CD8-positive, alpha-beta memory T cell (primary cell): ENCODE measurements at regions of chr16 and their contacts with region 1.

Region 1: GRCh38 chr16:3059000-3059722 is 6.3 kb upstream of the IL32 start:
- DNase-seq: peak; percentile 83 to 89 (median 85)
- H3K4me3 ChIP-seq: peak overlapping the region; percentile 71
- H3K4me3 Mint-ChIP-seq: peak overlapping the region; percentile 90 to 97 (median 93)
- H3K27ac ChIP-seq: peak overlapping the region; percentile 75
- H3K27ac Mint-ChIP-seq: peak overlapping the region; percentile 85 to 97 (median 91)
- H3K4me1 ChIP-seq: peaks cover 51% of the 10 kb centered on the region
- H3K4me1 Mint-ChIP-seq: peaks cover 46 to 76% (median 61%) of the 10 kb centered on the region in 3 donors
- H3K27me3 ChIP-seq: no peaks in the 10 kb centered on the region
- H3K27me3 Mint-ChIP-seq: no peaks in the 10 kb centered on the region

Region 2: GRCh38 chr16:3035302-3036234 is 23.6 kb before region 1 on chr16:
- CTCF ChIA-PET with region 1: interaction called, 82 read pairs
- POLR2A ChIA-PET with region 1: interaction called, 6 read pairs
- DNase-seq: no peak
- H3K4me3 ChIP-seq: no peak overlapping the region
- H3K4me3 Mint-ChIP-seq: peak overlapping the region in 6 of 7 donors; percentile 3 to 64 (median 34)
- H3K27ac ChIP-seq: no peak overlapping the region
- H3K27ac Mint-ChIP-seq: peak overlapping the region in 2 of 8 donors; percentile 24 to 87
- H3K4me1 ChIP-seq: peaks cover 11% of the 10 kb centered on the region
- H3K4me1 Mint-ChIP-seq: peaks cover 5 to 16% (median 9%) of the 10 kb centered on the region in 3 donors
- H3K27me3 ChIP-seq: peaks cover 64% of the 10 kb centered on the region
- H3K27me3 Mint-ChIP-seq: peaks cover 50 to 67% of the 10 kb centered on the region in 2 donors

Region 3: GRCh38 chr16:3074860-3075522 is 15.8 kb after region 1 on chr16:
- CTCF ChIA-PET with region 1: interaction called, 57 read pairs
- POLR2A ChIA-PET with region 1: interaction called, 53 read pairs
- DNase-seq: peak; percentile 68 to 94 (median 90)
- H3K4me3 ChIP-seq: peak overlapping the region; percentile 19
- H3K4me3 Mint-ChIP-seq: peak overlapping the region; percentile 58 to 91 (median 79)
- H3K27ac ChIP-seq: peak overlapping the region; percentile 45
- H3K27ac Mint-ChIP-seq: peak overlapping the region; percentile 88 to 97 (median 95)
- H3K4me1 ChIP-seq: peaks cover 94% of the 10 kb centered on the region
- H3K4me1 Mint-ChIP-seq: peaks cover 89 to 97% (median 94%) of the 10 kb centered on the region in 3 donors
- H3K27me3 ChIP-seq: no peaks in the 10 kb centered on the region
- H3K27me3 Mint-ChIP-seq: no peaks in the 10 kb centered on the region

Region 4: DNA sequence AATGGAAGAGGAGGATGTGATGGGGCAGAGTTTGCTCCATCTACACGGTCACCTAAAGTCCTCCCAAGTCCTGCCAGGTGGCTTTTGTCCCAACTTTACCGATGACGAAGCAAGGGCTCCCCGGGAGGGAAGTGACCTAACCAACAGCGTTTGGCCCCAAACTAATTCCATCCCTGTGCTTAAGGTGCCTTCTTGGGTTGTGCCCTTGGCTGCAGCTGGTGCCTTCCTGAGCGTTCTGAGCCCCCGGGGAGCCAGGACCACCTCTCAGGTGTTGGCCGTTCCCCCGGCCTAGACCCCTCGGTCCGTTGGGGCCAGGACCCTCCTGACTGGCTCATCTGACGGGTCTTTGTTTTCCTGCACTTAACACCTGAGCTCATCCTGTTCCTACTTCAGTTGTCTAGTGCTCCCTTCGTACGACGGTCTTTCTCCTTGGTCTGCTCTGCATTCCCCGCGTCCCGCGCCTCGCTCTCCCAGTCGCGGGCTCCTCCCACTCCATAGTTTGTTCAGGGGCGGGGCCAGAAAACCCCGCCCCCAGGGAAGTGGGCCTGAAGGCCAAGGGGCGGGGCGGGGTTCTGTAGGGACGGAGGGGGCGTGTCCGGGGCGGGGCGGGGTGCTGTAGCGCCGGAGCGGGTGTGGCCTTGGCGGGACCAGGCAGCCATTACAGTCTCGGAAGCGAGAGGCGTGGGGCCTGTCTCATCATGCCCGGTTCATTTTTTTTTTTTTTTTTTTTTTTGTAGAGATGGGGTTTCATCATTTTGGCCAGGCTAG is 40.8 kb after region 1 on chr16:
- CTCF ChIA-PET with region 1: interaction called, 49 read pairs
- POLR2A ChIA-PET with region 1: interaction called, 5 read pairs
- DNase-seq: peak; percentile 78 to 91 (median 87)
- H3K4me3 ChIP-seq: peak overlapping the region; percentile 32
- H3K4me3 Mint-ChIP-seq: peak overlapping the region; percentile 71 to 87 (median 84)
- H3K27ac ChIP-seq: no peak overlapping the region
- H3K27ac Mint-ChIP-seq: peak overlapping the region; percentile 27 to 94 (median 90)
- H3K4me1 ChIP-seq: peaks cover 37% of the 10 kb centered on the region
- H3K4me1 Mint-ChIP-seq: peaks cover 39 to 57% (median 41%) of the 10 kb centered on the region in 3 donors
- H3K27me3 ChIP-seq: no peaks in the 10 kb centered on the region
- H3K27me3 Mint-ChIP-seq: no peaks in the 10 kb centered on the region

Region 5: GRCh38 chr16:3129137-3130131 is 70.3 kb after region 1 on chr16:
- CTCF ChIA-PET with region 1: interaction called, 190 read pairs
- POLR2A ChIA-PET with region 1: interaction called, 28 read pairs
- DNase-seq: peak; percentile 64 to 89 (median 85)
- H3K4me3 ChIP-seq: peak overlapping the region; percentile 89
- H3K4me3 Mint-ChIP-seq: peak overlapping the region; percentile 87 to 96 (median 95)
- H3K27ac ChIP-seq: peak overlapping the region; percentile 62
- H3K27ac Mint-ChIP-seq: peak overlapping the region; percentile 71 to 96 (median 88)
- H3K4me1 ChIP-seq: peaks cover 34% of the 10 kb centered on the region
- H3K4me1 Mint-ChIP-seq: peaks cover 43 to 66% (median 52%) of the 10 kb centered on the region in 3 donors
- H3K27me3 ChIP-seq: no peaks in the 10 kb centered on the region
- H3K27me3 Mint-ChIP-seq: no peaks in the 10 kb centered on the region

Region 6: GRCh38 chr16:3165111-3165822 is 106.1 kb after region 1 on chr16:
- CTCF ChIA-PET with region 1: interaction called, 10 read pairs
- POLR2A ChIA-PET with region 1: no interaction called
- DNase-seq: no peak
- H3K4me3 ChIP-seq: peak overlapping the region; percentile 58
- H3K4me3 Mint-ChIP-seq: peak overlapping the region in 6 of 7 donors; percentile 50 to 83 (median 66)
- H3K27ac ChIP-seq: peak overlapping the region; percentile 54
- H3K27ac Mint-ChIP-seq: peak overlapping the region; percentile 39 to 86 (median 82)
- H3K4me1 ChIP-seq: peaks cover 5% of the 10 kb centered on the region
- H3K4me1 Mint-ChIP-seq: peaks cover 10 to 16% (median 13%) of the 10 kb centered on the region in 3 donors
- H3K27me3 ChIP-seq: no peaks in the 10 kb centered on the region
- H3K27me3 Mint-ChIP-seq: peaks cover 0 to 1% of the 10 kb centered on the region in 2 donors